ENCODE measurements at regions of chr17 and their contacts with region 1.

Region 1: GRCh38 chr17:46002311-46002972 is 3.4 kb downstream of the STH start:
- DNase-seq: peak; percentile 86
- CTCF ChIP-seq: peak; percentile 84

Region 2: GRCh38 chr17:46212634-46213435 is 210.4 kb after region 1 on chr17:
- in situ Hi-C with region 1: loop called (anchors 10 kb)
- DNase-seq: peak; percentile 71
- CTCF ChIP-seq: peak; percentile 67

Measured in GM13976 (cell line).